Activated CD4-positive, alpha-beta T cell treated with anti-CD3 and anti-CD28 coated beads, Interleukin-2, amount 10 ng/mL, durations not matched to agents 7 days and 5 days (primary cell): ENCODE measurements at regions of chr10 and their contacts with region 1.

Region 1: GRCh38 chr10:70146489-70147258 is at the start of gene TYSND1:
- DNase-seq: peak; percentile 96
- H3K4me3 Mint-ChIP-seq: peak within 1 kb of the TSS; percentile 85
- H3K27ac Mint-ChIP-seq: peak within 1 kb of the TSS; percentile 95
- H3K4me1 Mint-ChIP-seq: peaks cover 34% of the 10 kb centered on the region
- H3K27me3 Mint-ChIP-seq: no peaks in the 10 kb centered on the region
- total RNA-seq, gene TYSND1: 11.6 to 14.3 TPM

Region 2: DNA sequence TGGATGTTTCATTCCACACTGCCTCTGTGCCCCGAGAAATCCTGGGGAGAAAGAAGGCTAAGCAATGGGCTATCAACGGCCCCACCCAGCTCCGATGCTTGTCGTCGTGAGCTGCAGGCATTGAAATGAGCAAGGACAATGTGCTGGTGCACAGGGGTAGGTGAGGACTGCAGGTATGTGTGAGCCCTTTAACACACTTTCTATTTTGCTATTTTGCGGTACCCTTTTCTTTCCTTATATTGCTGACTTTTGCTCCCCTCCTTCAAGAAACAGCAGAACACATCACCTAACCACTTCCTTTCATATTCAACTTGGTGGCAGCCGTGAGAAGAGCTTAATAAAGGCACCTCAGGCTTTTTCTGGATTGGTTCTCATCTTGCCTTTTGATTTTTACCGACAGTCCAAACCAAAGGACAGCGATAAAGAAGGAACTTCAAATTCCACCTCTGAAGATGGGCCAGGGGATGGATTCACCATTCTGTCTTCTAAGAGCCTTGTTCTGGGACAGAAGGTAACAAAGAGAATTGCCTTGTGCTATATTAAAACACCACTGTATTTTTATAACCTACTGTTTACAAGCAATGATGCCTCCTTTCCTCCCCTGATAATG is 53.2 kb before region 1 on chr10:
- CTCF ChIA-PET with region 1: interaction called, 16 read pairs
- POLR2A ChIA-PET with region 1: interaction called, 5 read pairs
- DNase-seq: peak; percentile 46
- H3K4me3 Mint-ChIP-seq: peak overlapping the region; percentile 76
- H3K27ac Mint-ChIP-seq: peak overlapping the region; percentile 92
- H3K4me1 Mint-ChIP-seq: peaks cover 39% of the 10 kb centered on the region
- H3K27me3 Mint-ChIP-seq: no peaks in the 10 kb centered on the region

Region 3: DNA sequence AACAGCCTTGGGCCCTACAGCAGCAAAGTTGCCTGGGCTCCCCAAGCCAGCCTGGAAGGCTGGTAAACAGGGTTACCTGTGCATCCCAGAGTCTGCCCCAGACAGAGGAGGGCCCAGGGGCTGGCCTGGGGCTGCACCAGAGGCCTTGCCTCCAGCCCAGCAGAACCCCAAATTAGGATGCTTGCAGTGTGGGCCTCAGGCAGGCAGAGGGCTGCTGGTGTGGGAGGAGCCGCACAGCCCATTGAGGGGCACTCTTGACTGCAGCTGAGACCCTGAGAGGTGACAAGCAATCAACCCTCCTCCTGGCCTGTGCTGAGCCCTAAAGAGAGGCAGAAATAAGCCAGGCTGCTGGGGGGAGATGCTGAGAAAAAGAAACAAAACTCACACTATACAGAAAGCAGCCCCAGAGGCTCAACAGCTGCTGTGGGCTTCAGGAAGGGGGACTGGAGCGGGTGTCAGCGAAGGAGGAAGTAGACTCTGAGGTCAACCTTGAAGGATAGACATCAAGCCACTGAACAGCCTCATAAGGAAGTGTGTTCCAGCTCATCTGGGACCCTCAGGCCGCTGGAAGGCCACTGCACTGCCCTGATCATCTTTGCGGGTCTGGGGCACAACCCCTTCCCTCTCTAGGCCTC is 20.6 kb before region 1 on chr10:
- CTCF ChIA-PET with region 1: interaction called, 10 read pairs
- POLR2A ChIA-PET with region 1: no interaction called
- DNase-seq: no peak
- H3K4me3 Mint-ChIP-seq: no peak overlapping the region
- H3K27ac Mint-ChIP-seq: no peak overlapping the region
- H3K4me1 Mint-ChIP-seq: peaks cover 3% of the 10 kb centered on the region
- H3K27me3 Mint-ChIP-seq: no peaks in the 10 kb centered on the region

Region 4: DNA sequence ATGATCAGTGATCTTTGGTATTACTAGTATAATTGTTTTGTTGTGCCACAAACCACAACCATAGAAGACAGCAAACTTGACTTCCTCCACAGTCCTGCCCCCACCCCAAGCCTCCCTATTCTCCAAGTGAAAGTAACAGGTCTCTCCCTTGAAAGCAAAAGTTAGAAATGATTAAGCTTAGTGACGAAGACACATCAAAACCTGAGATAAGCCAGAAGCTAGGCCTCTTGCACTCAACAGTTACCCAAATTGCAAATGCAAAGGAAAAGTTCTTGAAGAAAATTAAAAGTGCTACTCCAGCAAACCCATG is 16.2 kb after region 1 on chr10:
- CTCF ChIA-PET with region 1: interaction called, 45 read pairs
- POLR2A ChIA-PET with region 1: no interaction called
- DNase-seq: peak; percentile 83
- H3K4me3 Mint-ChIP-seq: peak overlapping the region; percentile 51
- H3K27ac Mint-ChIP-seq: peak overlapping the region; percentile 88
- H3K4me1 Mint-ChIP-seq: peaks cover 67% of the 10 kb centered on the region
- H3K27me3 Mint-ChIP-seq: no peaks in the 10 kb centered on the region

Region 5: DNA sequence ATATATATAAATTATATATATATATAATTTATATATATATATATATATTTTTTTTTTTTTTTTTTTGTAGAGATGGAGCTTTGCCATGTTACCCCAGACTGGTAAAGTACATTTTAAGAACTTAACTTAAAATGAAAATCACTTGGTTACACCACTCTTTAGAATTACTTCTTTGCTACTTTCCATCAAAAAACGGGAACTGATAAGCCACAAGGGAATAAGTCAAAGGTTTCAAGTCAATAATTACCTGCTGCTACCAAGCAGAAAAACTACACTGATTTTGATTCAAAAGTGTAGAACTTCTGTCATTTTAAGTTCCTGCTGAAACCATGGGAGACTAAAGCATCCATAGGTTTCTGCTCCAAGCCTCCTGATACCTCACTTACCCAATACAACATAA is 74.4 kb after region 1 on chr10:
- CTCF ChIA-PET with region 1: interaction called, 11 read pairs
- POLR2A ChIA-PET with region 1: interaction called, 3 read pairs
- DNase-seq: no peak
- H3K4me3 Mint-ChIP-seq: peak overlapping the region; percentile 7
- H3K27ac Mint-ChIP-seq: peak overlapping the region; percentile 68
- H3K4me1 Mint-ChIP-seq: peaks cover 23% of the 10 kb centered on the region
- H3K27me3 Mint-ChIP-seq: no peaks in the 10 kb centered on the region